A549 (cell line): ENCODE measurements at regions of chr6 and their contacts with region 1.

Region 1: GRCh38 chr6:108113557-108114519 is 39.3 kb upstream of the OSTM1 start:
- DNase-seq: peak; percentile 34 to 74
- ATAC-seq: peak; percentile 22 to 66; a peak in 3 of 6 replicates
- H3K4me3 ChIP-seq: 0 out of 3 replicates have a peak overlapping the region, but pooled peaks have one; percentile 29
- H3K27ac ChIP-seq: no peak overlapping the region
- H3K4me1 ChIP-seq: peaks cover 3% of the 10 kb centered on the region; the same call in 1 of the 3 replicates
- CTCF ChIP-seq: peak; percentile 65
- EP300 ChIP-seq: no peak
- POLR2A ChIP-seq: no peak
- RAD21 ChIP-seq: peak; percentile 79

Region 2: DNA sequence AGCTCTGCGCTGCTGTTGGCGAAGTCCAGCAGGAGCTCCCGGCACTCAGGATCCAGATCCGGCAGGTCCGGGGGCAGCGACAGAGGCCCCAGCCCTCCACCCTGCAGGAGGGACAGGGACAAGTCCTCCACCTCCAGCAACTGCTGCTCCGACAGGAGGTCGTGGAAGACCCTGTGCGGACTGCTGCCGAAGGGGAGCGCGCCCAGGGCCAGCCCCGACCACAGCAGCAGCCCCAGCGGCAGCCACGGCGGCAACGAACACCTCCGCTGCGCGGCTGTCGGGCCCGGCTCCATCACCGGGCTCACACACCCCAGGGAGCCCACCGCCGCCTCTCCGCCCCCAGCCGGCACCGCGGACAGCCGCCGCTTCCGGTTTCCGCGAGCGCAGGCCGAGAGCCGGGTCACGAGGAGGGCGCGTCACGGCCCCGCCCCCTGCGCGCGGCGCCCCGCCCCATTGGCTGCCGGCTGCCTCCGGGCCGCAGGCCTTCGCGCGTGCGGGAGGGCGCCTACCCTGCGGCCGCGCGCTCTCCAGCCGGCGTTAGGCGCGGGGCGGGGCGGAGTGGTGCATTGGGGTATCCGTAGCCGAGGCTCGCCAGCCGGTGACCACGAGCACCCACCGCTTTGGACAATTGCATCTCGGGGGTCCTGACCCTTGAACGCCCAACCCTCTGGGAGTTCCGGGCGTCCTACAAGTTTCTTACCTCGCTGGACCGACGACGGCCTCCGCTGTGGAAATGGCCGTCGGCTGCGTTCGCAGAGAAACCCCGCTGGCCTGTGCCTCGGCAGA is 39.3 kb before region 1 on chr6 and contains the start of gene OSTM1:
- CTCF ChIA-PET with region 1: no interaction called
- POLR2A ChIA-PET with region 1: no interaction called
- DNase-seq: peak; percentile 79 to 82
- ATAC-seq: peak; percentile 99
- H3K4me3 ChIP-seq: peak within 1 kb of the TSS; percentile 95
- H3K27ac ChIP-seq: peak within 1 kb of the TSS; percentile 93 to 97
- H3K4me1 ChIP-seq: peaks cover 7% of the 10 kb centered on the region; the same call in 1 of the 3 replicates
- CTCF ChIP-seq: no peak
- EP300 ChIP-seq: no peak
- POLR2A ChIP-seq: peak; percentile 75
- RAD21 ChIP-seq: no peak
- polyA plus RNA-seq, gene OSTM1: 41.7 and 49.6 TPM in 2 replicates

Region 3: GRCh38 chr6:108277821-108278220 is 164.0 kb after region 1 on chr6:
- CTCF ChIA-PET with region 1: no interaction called
- POLR2A ChIA-PET with region 1: no interaction called
- DNase-seq: no peak
- ATAC-seq: no peak
- H3K4me3 ChIP-seq: no peak overlapping the region
- H3K27ac ChIP-seq: no peak overlapping the region
- H3K4me1 ChIP-seq: no peaks in the 10 kb centered on the region
- CTCF ChIP-seq: no peak
- EP300 ChIP-seq: no peak
- POLR2A ChIP-seq: no peak
- RAD21 ChIP-seq: no peak

Region 4: GRCh38 chr6:108524528-108525248 is 410.9 kb after region 1 on chr6:
- CTCF ChIA-PET with region 1: interaction called, 26 read pairs
- POLR2A ChIA-PET with region 1: no interaction called
- DNase-seq: no peak
- ATAC-seq: no peak
- H3K4me3 ChIP-seq: no peak overlapping the region
- H3K27ac ChIP-seq: no peak overlapping the region
- H3K4me1 ChIP-seq: no peaks in the 10 kb centered on the region
- CTCF ChIP-seq: no peak
- EP300 ChIP-seq: no peak
- POLR2A ChIP-seq: no peak
- RAD21 ChIP-seq: no peak